AG04450 (cell line): ENCODE measurements at regions of chr15 and their contacts with region 1.

Region 1: DNA sequence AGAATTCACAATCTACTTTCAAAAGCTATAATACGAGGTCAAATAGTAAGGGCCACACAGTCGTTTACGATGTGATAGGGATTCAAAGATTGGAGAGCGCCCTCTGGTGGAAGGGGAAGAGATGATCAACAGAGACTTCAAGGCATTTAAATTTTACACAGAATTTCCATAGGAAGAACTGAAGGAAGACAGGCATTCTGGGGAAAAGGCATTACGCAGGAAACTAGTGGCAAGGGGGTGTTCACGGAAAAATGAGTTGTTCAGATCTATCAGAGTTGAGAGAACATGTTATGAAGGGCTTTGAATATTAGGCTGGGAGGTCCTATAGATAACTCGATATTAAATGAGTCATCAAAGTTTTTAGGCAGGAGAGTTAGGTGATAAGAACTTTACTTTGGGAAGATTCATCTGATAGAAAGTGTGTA is 128.7 kb downstream of the FRMD5 start:
- DNase-seq: peak; percentile 29
- H3K4me3 ChIP-seq: peak overlapping the region; percentile 14; the same call in 1 of the 2 replicates
- H3K27ac ChIP-seq: no peak overlapping the region
- H3K27me3 ChIP-seq: no peaks in the 10 kb centered on the region
- CTCF ChIP-seq: peak; percentile 84

Region 2: DNA sequence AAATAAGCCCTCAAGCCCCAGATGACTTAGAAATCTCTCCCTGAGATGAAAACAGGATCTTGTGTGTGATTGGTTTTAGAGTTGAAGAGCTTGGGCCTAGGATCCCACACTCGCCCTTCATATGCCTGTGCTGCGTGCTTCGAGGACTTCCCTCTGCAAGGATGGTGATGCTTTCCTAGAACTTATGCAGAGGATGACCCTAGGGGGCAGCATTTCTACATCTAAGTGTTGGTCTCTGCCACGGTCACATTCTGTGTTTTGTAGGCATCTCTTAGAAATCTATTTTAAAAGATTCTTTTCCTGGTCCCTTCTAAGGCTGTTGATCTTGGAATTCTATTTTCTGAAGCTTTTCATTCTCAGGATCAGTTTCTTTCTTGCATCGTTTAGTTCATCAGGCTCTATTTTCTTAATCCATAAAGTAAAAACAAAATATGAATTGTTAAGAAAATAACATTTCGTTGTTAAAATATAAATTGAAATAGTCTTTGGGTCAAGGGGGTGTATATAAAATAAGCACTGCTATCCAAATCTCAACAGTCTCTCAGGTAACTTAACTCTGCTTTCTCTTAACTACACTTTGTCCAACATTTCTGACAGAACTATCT is 193.8 kb before region 1 on chr15:
- CTCF ChIA-PET with region 1: interaction called, 15 read pairs
- POLR2A ChIA-PET with region 1: no interaction called
- DNase-seq: peak; percentile 51
- H3K4me3 ChIP-seq: no peak overlapping the region
- H3K27ac ChIP-seq: no peak overlapping the region
- H3K27me3 ChIP-seq: no peaks in the 10 kb centered on the region
- CTCF ChIP-seq: peak; percentile 80

Region 3: DNA sequence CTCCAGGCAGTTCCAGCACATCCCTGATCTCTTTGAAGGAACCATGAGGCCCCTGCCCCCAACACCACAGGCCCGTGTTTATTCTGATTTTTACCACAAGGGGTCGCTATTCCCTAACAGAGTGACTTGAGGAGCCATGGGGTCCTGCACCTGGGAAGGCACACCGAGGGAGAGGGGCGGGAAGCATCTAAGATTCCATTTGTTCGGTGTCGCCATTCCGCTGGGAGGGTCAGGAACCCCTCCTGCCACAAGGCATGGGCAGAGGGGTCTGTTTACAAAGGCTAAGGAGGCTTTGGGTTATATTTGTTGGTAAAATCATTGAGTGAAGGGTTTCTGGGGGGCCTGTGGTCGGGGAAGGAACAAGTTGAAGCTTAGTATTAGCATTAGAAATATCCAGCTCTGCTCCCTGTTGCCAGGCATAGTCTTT is 162.5 kb before region 1 on chr15:
- CTCF ChIA-PET with region 1: interaction called, 61 read pairs
- POLR2A ChIA-PET with region 1: no interaction called
- DNase-seq: peak; percentile 26
- H3K4me3 ChIP-seq: no peak overlapping the region
- H3K27ac ChIP-seq: no peak overlapping the region
- H3K27me3 ChIP-seq: no peaks in the 10 kb centered on the region
- CTCF ChIP-seq: peak; percentile 89

Region 4: GRCh38 chr15:43913026-43913927 is 153.1 kb before region 1 on chr15:
- CTCF ChIA-PET with region 1: interaction called, 11 read pairs
- POLR2A ChIA-PET with region 1: no interaction called
- DNase-seq: peak; percentile 90
- H3K4me3 ChIP-seq: no peak overlapping the region
- H3K27ac ChIP-seq: peak overlapping the region; percentile 91
- H3K27me3 ChIP-seq: no peaks in the 10 kb centered on the region
- CTCF ChIP-seq: no peak; the same call in 1 of the 2 replicates

Region 5: GRCh38 chr15:43920815-43921214 is 145.5 kb before region 1 on chr15:
- CTCF ChIA-PET with region 1: interaction called, 12 read pairs
- POLR2A ChIA-PET with region 1: no interaction called
- DNase-seq: no peak
- H3K4me3 ChIP-seq: no peak overlapping the region
- H3K27ac ChIP-seq: no peak overlapping the region
- H3K27me3 ChIP-seq: no peaks in the 10 kb centered on the region
- CTCF ChIP-seq: no peak

Region 6: GRCh38 chr15:43939070-43939469 is 127.3 kb before region 1 on chr15:
- CTCF ChIA-PET with region 1: interaction called, 12 read pairs
- POLR2A ChIA-PET with region 1: no interaction called
- DNase-seq: no peak
- H3K4me3 ChIP-seq: no peak overlapping the region
- H3K27ac ChIP-seq: no peak overlapping the region
- H3K27me3 ChIP-seq: no peaks in the 10 kb centered on the region
- CTCF ChIP-seq: peak; percentile 70

Region 7: GRCh38 chr15:44082558-44083157 is 16.3 kb after region 1 on chr15:
- CTCF ChIA-PET with region 1: interaction called, 10 read pairs
- POLR2A ChIA-PET with region 1: no interaction called
- DNase-seq: no peak
- H3K4me3 ChIP-seq: no peak overlapping the region
- H3K27ac ChIP-seq: no peak overlapping the region
- H3K27me3 ChIP-seq: no peaks in the 10 kb centered on the region
- CTCF ChIP-seq: no peak